Activated CD4-positive, alpha-beta T cell treated with anti-CD3 and anti-CD28 coated beads for 36 hours (primary cell): ENCODE measurements at regions of chr19 and their contacts with region 1.

Region 1: DNA sequence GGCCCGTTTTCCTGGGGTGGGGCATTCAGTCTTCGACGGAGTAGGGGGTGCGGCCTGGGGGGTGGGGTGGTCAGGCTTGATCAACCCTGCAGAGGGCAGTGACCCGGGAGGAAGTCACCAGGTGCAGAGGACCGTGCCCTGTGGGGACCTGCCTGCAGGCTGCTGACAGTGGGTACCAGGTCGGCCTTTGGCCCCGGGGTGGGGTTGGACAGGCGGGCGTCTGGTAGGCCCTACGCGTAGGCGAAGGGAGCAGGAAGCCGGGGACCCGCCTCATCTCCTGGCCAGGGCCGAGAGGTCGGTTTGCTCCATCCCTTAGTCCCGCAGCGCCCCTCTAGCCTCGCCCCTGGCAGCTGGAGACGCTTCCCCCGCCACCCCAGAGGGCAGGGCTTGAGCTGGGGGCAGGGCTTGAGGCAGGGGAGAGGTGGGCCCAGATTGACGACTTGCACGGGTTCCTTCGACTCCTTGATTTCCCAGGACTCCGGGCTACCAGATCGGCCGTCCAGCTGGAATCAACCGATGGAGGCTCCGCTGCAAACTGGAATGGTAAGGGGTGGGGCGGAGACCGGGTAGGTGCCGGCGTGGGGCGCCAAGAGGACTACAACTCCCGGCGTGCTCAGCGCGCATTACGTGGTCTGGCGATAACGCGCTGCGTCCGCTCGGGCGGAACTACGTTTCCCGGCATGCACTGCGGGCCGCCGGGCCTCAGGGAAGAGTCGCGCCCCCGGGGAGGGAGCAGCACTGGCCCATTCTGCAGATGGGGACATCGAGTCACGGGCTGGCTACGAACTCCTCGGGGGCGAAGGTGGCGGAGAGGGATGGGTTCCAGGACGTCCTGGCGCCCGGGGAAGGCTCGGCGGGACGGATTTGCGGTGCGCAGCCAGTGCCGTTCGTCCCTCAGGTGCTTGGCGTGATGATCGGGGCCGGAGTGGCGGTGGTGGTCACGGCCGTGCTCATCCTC is at the start of gene PNPLA6:
- DNase-seq: peak; percentile 97
- ATAC-seq: peak; percentile 80
- H3K4me3 Mint-ChIP-seq: peak within 1 kb of the TSS; percentile 91
- H3K27ac Mint-ChIP-seq: peak within 1 kb of the TSS; percentile 84
- H3K4me1 Mint-ChIP-seq: peaks cover 20% of the 10 kb centered on the region
- H3K27me3 Mint-ChIP-seq: no peaks in the 10 kb centered on the region
- total RNA-seq, gene PNPLA6: 82.2 to 108 TPM

Region 2: GRCh38 chr19:6362027-6362350 is 1173.3 kb before region 1 on chr19:
- CTCF ChIA-PET with region 1: no interaction called
- POLR2A ChIA-PET with region 1: no interaction called
- intact Hi-C with region 1: loop called in 1 of 2 experiments (anchors 10 kb)
- DNase-seq: no peak
- ATAC-seq: peak; percentile 1
- H3K4me3 Mint-ChIP-seq: peak overlapping the region; percentile 85
- H3K27ac Mint-ChIP-seq: peak overlapping the region; percentile 91
- H3K4me1 Mint-ChIP-seq: peaks cover 16% of the 10 kb centered on the region
- H3K27me3 Mint-ChIP-seq: no peaks in the 10 kb centered on the region

Region 3: DNA sequence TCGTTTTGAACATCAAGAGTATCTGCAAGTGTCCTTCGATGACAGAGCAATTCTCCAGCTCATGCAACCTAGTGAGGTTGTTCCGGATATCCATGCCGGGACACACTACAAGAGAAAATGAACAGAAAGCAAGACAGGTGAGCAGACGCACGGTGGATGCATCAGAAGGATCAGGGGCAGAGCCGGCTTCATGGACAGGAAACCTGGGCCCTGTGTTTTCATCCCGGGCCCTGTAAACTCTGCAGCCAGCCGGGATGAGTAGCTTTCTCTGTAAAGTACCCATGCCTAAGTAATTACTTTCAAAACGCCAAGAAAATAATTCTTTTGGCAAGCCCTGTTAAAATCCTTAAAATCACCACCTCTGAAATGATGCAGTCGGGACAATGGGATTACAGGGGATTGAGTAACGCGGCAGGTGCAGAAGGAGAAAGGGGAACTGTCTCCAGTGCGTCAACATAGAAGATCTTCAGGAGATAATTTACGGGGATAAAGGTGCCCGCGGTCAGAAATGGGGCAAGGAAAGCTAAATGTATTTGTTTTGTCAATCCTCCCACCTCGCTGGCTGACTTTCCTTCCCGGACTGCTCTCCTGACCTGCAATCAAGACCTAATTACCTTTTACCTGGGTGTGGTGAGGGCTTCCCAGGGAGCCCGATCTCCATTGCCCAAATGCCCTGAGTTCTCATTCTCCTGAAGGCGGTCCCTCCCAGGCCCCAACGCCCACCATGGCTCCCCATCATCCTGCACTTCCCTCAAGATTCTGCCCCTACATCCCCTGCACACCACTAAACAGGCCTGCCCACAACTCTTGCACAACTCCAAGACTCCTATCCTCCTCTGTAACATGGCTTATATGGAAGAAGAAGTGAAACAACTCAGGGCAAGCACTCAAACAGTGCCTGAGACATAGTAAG is 267.3 kb before region 1 on chr19:
- CTCF ChIA-PET with region 1: no interaction called
- POLR2A ChIA-PET with region 1: no interaction called
- intact Hi-C with region 1: no loop called
- DNase-seq: no peak
- ATAC-seq: no peak
- H3K4me3 Mint-ChIP-seq: no peak overlapping the region
- H3K27ac Mint-ChIP-seq: no peak overlapping the region
- H3K4me1 Mint-ChIP-seq: no peaks in the 10 kb centered on the region
- H3K27me3 Mint-ChIP-seq: no peaks in the 10 kb centered on the region

Region 4: DNA sequence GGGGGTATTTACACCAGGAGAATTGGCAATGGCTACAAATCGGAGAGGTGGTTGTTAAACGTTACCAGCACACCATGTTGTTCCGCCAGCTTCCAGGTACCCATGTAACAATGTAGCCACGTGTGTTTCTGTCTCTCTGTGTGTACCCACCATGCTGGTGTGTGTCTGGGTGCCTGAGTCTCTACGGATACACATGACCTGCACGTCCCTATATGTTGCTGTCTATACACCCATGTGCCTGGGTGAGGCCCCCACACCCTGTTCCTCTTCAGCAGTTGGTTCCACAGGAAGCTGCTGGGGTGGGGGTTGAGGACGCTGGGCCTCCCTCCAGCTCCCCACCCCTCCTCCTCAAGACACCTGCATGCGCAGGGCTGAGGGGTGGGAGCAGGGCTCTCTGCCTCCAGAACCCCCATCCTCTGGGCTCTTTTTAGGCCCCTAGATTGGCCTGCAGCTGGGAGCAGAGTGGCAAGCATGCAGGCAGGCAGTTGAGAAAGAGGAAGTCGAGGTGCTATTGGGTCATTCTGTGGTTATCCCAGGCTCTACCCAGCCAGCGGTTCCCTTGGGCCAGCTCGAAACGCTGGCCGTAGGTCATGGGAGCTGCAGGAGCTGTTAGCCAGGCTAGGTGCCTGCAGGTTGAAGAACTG is 186.6 kb before region 1 on chr19 and contains the start of gene ARHGEF18:
- CTCF ChIA-PET with region 1: interaction called, 3 read pairs
- POLR2A ChIA-PET with region 1: no interaction called
- intact Hi-C with region 1: loop called in 1 of 2 experiments (anchors 10 kb)
- DNase-seq: peak; percentile 75
- ATAC-seq: peak; percentile 71
- H3K4me3 Mint-ChIP-seq: peak within 1 kb of the TSS; percentile 84
- H3K27ac Mint-ChIP-seq: peak within 1 kb of the TSS; percentile 90
- H3K4me1 Mint-ChIP-seq: peaks cover 60% of the 10 kb centered on the region
- H3K27me3 Mint-ChIP-seq: no peaks in the 10 kb centered on the region
- total RNA-seq, gene ARHGEF18: 36.6 to 39.3 TPM

Region 5: GRCh38 chr19:7488736-7489353 is 46.5 kb before region 1 on chr19 and contains the start of gene PEX11G:
- CTCF ChIA-PET with region 1: no interaction called
- POLR2A ChIA-PET with region 1: no interaction called
- intact Hi-C with region 1: loop called in 1 of 2 experiments (anchors 1 kb)
- DNase-seq: peak; percentile 95
- ATAC-seq: peak; percentile 88
- H3K4me3 Mint-ChIP-seq: peak within 1 kb of the TSS; percentile 73
- H3K27ac Mint-ChIP-seq: peak within 1 kb of the TSS; percentile 76
- H3K4me1 Mint-ChIP-seq: peaks cover 20% of the 10 kb centered on the region
- H3K27me3 Mint-ChIP-seq: no peaks in the 10 kb centered on the region
- total RNA-seq, gene PEX11G: 0.51 to 1.1 TPM

Region 6: DNA sequence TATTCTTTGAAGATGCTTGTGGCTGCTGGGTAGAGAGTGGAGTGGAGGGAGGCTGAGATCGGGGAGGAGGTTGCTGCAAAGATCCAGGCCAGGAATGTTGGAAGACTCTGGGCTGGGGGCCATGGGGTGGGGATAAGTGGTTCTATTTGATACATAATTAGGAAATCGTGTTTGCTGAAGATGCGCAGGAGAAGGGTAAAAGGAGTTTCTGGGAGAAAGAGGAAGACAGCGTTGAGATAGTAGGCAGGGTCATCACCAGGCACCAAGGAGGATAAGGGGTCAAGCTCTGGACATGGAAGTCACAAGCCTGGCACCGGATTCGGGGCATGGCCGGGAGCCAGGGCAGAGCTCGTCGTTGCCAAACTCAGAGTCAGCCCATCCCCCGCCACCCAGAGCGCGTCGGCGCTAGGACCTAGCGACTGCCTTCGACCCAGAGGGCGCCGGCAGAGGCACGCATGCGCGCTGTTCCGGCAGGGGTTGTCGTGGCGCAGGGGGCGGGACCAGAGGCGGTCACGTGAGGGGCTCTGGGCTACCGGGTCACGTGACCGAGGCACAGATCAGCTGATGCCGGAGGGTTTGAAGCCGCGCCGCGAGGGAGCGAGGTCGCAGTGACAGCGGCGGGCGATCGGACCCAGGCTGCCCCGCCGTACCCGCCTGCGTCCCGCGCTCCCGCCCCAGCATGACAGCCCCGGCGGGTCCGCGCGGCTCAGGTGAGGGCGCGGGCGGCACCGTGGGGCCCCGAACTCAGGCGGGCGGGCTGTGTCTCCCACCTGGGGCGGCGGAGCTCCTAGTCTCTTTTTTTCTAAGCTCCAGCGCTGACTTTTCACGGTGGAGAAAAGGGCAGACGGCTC is 13.0 kb before region 1 on chr19 and contains the start of gene MCOLN1:
- CTCF ChIA-PET with region 1: interaction called, 7 read pairs
- POLR2A ChIA-PET with region 1: interaction called, 3 read pairs
- intact Hi-C with region 1: loop called (anchors 1 kb)
- DNase-seq: peak; percentile 100
- ATAC-seq: peak; percentile 96
- H3K4me3 Mint-ChIP-seq: peak within 1 kb of the TSS; percentile 61
- H3K27ac Mint-ChIP-seq: peak within 1 kb of the TSS; percentile 76
- H3K4me1 Mint-ChIP-seq: peaks cover 11% of the 10 kb centered on the region
- H3K27me3 Mint-ChIP-seq: no peaks in the 10 kb centered on the region
- total RNA-seq, gene MCOLN1: 6.7 to 7.7 TPM

Region 7: GRCh38 chr19:7629347-7630054 is 94.2 kb after region 1 on chr19 and contains the starts of genes PET100 and XAB2:
- CTCF ChIA-PET with region 1: no interaction called
- POLR2A ChIA-PET with region 1: no interaction called
- intact Hi-C with region 1: loop called in 1 of 2 experiments (anchors 1 kb)
- DNase-seq: peak; percentile 97
- ATAC-seq: peak; percentile 99
- H3K4me3 Mint-ChIP-seq: peak within 1 kb of the TSS; percentile 88
- H3K27ac Mint-ChIP-seq: peak within 1 kb of the TSS; percentile 97
- H3K4me1 Mint-ChIP-seq: peaks cover 32% of the 10 kb centered on the region
- H3K27me3 Mint-ChIP-seq: no peaks in the 10 kb centered on the region
- total RNA-seq, gene PET100: 45.1 to 99.4 TPM
- total RNA-seq, gene XAB2: 45.9 to 48.3 TPM

Region 8: DNA sequence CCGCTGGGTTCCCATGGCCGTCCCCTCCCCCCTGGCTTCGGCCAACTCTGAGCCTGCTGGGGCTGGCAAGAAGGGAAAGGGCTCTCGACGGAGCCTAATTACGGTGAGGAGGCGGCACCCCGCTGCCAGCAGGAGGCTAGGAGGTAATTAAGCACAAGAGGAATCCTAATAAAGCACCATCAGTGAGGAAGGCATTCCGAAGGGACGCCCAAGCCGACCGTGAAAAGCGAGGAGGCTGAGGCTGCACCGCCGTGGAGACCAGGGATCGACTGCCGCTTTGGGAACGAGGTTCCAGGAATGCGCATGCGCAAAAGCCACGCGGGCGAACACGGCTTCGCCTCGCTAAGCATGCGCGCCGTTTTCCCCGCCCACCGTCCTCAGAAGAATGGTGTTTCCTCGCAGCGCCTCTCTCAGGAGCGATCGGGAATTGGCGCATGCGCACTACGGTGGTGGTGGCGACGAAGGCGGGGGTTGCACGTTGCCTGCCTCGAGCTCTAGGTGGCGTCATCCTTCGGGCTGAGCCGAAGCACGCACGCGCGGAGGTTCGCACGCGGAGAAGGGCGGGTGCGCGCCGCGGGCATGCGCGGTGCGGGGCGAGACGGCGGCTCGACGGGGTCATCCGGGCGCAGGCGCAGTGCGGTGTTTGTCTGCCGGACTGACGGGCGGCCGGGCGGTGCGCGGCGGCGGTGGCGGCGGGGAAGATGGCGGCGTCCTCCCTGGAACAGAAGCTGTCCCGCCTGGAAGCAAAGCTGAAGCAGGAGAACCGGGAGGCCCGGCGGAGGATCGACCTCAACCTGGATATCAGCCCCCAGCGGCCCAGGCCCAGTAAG is 368.1 kb after region 1 on chr19 and contains the start of gene MAP2K7:
- CTCF ChIA-PET with region 1: no interaction called
- POLR2A ChIA-PET with region 1: no interaction called
- intact Hi-C with region 1: loop called in 1 of 2 experiments (anchors 1 kb)
- DNase-seq: peak; percentile 100
- ATAC-seq: peak; percentile 91
- H3K4me3 Mint-ChIP-seq: peak within 1 kb of the TSS; percentile 85
- H3K27ac Mint-ChIP-seq: peak within 1 kb of the TSS; percentile 92
- H3K4me1 Mint-ChIP-seq: peaks cover 22% of the 10 kb centered on the region
- H3K27me3 Mint-ChIP-seq: no peaks in the 10 kb centered on the region
- total RNA-seq, gene MAP2K7: 32.2 to 33.7 TPM